Activated B cell treated with CpG ODN at 0.5 μM for 24 hours (primary cell): ENCODE measurements at regions of chr6 and their contacts with region 1.

Region 1: GRCh38 chr6:142913511-142914047 is 31.4 kb downstream of the HIVEP2 start:
- DNase-seq: peak; percentile 52
- ATAC-seq: peak; percentile 93
- H3K4me3 Mint-ChIP-seq: peak overlapping the region; percentile 78
- H3K27ac Mint-ChIP-seq: peak overlapping the region; percentile 98
- H3K4me1 Mint-ChIP-seq: peaks cover 52% of the 10 kb centered on the region
- H3K27me3 Mint-ChIP-seq: no peaks in the 10 kb centered on the region
- CTCF ChIP-seq: no peak

Region 2: DNA sequence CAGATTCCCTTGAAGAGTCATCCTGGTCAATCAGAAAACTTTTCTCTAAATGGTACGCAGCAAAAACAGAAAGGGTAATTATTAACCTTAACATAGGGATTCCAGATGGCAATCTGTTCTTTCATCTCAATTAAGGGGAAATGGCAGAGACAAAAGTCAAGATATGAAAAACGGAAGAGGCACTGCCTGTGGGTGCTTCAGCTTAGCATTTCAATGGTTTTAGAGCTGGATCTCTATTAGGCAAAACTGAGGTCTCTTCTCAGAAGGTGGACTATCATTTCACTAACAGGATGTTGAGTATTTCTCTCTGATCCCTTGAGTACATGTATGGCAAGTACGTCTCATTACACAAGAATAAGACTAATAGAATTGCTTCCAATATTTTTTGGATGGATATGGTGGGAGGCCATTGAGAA is 265.5 kb before region 1 on chr6:
- CTCF ChIA-PET with region 1: no interaction called
- POLR2A ChIA-PET with region 1: no interaction called
- intact Hi-C with region 1: no loop called
- DNase-seq: no peak
- ATAC-seq: no peak
- H3K4me3 Mint-ChIP-seq: no peak overlapping the region
- H3K27ac Mint-ChIP-seq: no peak overlapping the region
- H3K4me1 Mint-ChIP-seq: no peaks in the 10 kb centered on the region
- H3K27me3 Mint-ChIP-seq: peaks cover 9% of the 10 kb centered on the region
- CTCF ChIP-seq: no peak

Region 3: DNA sequence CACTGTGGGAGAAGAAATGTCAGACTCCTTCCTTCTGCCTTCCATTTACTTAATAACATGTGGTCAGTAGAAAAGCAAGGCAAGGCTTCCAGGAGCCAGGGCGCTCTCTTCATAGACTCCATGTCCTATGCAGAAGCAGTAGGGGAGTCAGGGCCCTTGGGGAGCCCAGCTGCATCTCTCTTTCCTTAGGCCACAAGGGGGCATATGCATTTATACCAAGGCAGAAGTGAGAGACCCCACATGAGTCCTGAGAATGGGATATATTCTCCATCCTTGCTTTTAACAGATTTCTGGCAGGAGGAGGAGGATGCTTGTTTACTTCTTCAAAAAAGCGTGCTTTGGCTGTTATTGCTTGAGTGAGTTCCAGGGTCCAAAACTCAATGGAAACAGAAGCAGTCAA is 167.1 kb before region 1 on chr6:
- CTCF ChIA-PET with region 1: interaction called, 4 read pairs
- POLR2A ChIA-PET with region 1: no interaction called
- intact Hi-C with region 1: loop called (anchors 1 kb)
- DNase-seq: no peak
- ATAC-seq: peak; percentile 58
- H3K4me3 Mint-ChIP-seq: no peak overlapping the region
- H3K27ac Mint-ChIP-seq: no peak overlapping the region
- H3K4me1 Mint-ChIP-seq: peaks cover 11% of the 10 kb centered on the region
- H3K27me3 Mint-ChIP-seq: peaks cover 3% of the 10 kb centered on the region
- CTCF ChIP-seq: no peak

Region 4: DNA sequence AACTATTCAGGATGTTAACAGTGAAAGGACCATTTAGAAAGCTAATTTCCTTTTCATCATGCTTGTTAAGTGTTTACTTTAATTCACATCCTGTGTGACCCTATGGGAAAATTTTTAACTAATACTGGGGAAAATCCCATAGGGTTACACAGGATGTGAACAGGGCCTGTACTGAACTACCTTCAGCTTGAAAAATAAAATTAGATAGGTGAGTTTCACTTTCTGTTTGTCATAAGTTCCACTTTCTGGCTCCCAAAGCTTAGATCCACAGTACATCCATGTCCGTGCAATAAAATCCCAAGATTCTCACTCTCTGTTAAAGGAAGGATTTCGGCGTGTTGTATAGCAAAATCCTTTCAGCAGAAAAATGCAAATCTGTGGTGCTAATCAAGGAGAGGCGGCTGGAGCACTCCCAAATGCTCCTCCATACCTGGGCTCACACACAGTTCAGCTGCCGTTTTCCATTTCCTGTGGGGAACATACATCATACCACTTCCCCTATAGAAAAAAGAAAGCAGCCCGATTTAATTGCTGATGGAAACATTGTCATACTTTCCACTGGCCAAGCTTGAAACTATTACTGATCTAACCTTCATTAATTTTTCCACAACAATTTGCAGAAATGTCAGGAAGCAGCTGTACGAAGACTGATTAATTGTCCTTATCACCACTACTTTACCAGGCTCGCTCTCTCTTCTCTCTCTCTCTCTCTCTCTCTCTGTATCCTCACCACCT is 93.8 kb before region 1 on chr6:
- CTCF ChIA-PET with region 1: no interaction called
- POLR2A ChIA-PET with region 1: interaction called, 4 read pairs
- intact Hi-C with region 1: loop called (anchors 1 kb)
- DNase-seq: no peak
- ATAC-seq: peak; percentile 61
- H3K4me3 Mint-ChIP-seq: peak overlapping the region; percentile 74
- H3K27ac Mint-ChIP-seq: peak overlapping the region; percentile 93
- H3K4me1 Mint-ChIP-seq: peaks cover 79% of the 10 kb centered on the region
- H3K27me3 Mint-ChIP-seq: no peaks in the 10 kb centered on the region
- CTCF ChIP-seq: no peak

Region 5: GRCh38 chr6:142857233-142857761 is 56.3 kb before region 1 on chr6:
- CTCF ChIA-PET with region 1: no interaction called
- POLR2A ChIA-PET with region 1: interaction called, 3 read pairs
- intact Hi-C with region 1: loop called (anchors 1 kb)
- DNase-seq: no peak
- ATAC-seq: peak; percentile 26
- H3K4me3 Mint-ChIP-seq: peak overlapping the region; percentile 73
- H3K27ac Mint-ChIP-seq: peak overlapping the region; percentile 95
- H3K4me1 Mint-ChIP-seq: peaks cover 90% of the 10 kb centered on the region
- H3K27me3 Mint-ChIP-seq: no peaks in the 10 kb centered on the region
- CTCF ChIP-seq: no peak

Region 6: DNA sequence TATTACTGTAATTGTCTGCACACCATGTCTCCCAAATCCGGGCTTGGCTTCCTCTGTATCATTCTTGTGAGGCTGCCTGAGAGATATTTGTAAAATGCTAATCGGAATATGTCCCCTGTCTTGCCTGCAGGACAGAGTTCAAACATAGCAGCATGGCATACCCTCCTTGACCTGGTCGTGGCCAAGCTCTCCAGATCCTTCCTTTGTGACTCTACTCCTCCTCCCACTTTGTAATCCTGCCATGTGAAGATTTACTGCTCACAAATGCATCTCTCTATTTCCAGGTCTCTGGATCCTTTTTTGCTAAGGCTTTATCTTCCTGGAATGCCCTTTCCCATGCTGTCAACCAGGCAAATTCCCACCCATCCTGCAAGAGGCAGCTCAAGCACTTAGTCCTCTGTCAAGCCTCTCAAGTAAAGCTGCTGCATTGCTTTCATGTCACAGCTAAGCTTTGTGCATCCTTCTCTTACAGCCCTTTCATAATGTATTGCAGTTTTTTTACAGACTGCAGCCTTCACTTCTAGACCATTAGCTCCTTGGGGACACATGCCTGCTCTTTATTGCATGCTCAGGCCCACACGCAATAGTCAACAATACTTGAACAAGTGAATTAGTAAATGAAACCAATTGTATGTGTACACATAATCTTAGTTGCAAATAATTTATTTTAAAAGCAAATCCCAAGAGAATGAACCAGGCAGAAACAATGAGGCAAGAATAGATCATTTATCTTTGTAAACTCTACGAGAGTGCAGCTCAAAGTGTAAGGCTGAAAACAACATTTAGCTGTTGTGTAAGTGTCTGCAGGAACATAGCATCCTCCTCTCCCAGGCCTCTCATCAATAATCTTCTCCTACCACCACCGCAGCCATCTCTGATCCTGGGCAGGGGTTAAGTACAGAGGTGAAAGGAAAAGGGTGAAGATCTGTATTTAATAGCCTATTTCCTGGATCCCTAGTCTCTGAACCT is 14.4 kb before region 1 on chr6:
- CTCF ChIA-PET with region 1: no interaction called
- POLR2A ChIA-PET with region 1: no interaction called
- intact Hi-C with region 1: no loop called
- DNase-seq: no peak
- ATAC-seq: no peak
- H3K4me3 Mint-ChIP-seq: no peak overlapping the region
- H3K27ac Mint-ChIP-seq: no peak overlapping the region
- H3K4me1 Mint-ChIP-seq: peaks cover 36% of the 10 kb centered on the region
- H3K27me3 Mint-ChIP-seq: no peaks in the 10 kb centered on the region
- CTCF ChIP-seq: no peak

Region 7: DNA sequence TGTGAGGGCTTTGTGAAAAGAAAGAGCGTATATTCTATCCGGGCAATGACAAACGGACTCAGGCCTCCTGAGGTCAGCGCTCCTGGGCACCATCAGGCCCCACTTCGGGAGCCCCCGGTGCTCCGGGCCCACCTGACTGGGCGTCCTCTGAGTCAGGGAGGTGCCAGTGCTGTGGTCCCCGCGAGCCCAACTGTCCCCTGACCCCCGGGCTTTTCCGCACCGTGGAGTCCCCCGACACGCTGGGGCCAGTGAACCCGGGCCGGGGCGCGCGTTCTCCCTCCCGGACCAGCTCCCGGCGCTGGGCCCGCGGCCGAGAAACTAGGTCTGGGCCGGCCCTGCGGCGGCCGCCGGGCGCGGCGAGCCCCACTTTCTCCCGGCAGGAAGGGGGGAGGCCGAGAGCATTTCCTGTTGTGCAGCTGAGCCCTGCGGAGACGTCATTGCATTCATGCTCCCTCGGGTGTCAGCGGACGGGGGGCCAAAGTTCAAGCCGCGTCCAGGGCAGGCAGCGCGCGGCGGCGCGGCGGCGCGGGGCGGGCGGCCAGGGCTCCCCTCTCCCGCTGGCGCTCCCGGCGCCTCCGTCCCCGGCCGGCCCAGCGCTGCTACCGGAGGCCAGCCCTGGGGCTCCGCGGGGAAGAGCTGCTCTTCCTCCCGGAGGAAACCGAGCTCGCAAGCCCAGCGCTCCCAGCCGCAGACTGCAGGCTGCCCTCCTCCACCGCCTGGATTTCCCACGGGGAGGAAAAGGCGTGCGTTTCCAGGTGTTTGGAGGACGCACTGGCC is 13.1 kb after region 1 on chr6:
- CTCF ChIA-PET with region 1: no interaction called
- POLR2A ChIA-PET with region 1: interaction called, 23 read pairs
- intact Hi-C with region 1: loop called (anchors 1 kb)
- DNase-seq: peak; percentile 72
- ATAC-seq: peak; percentile 93
- H3K4me3 Mint-ChIP-seq: peak overlapping the region; percentile 86
- H3K27ac Mint-ChIP-seq: peak overlapping the region; percentile 93
- H3K4me1 Mint-ChIP-seq: peaks cover 50% of the 10 kb centered on the region
- H3K27me3 Mint-ChIP-seq: no peaks in the 10 kb centered on the region
- CTCF ChIP-seq: no peak

Region 8: GRCh38 chr6:143026696-143027449 is 113.3 kb after region 1 on chr6:
- CTCF ChIA-PET with region 1: no interaction called
- POLR2A ChIA-PET with region 1: no interaction called
- intact Hi-C with region 1: loop called (anchors 1 kb)
- DNase-seq: peak; percentile 26
- ATAC-seq: peak; percentile 68
- H3K4me3 Mint-ChIP-seq: no peak overlapping the region
- H3K27ac Mint-ChIP-seq: no peak overlapping the region
- H3K4me1 Mint-ChIP-seq: peaks cover 5% of the 10 kb centered on the region
- H3K27me3 Mint-ChIP-seq: no peaks in the 10 kb centered on the region
- CTCF ChIP-seq: no peak